Activated T-helper 2 cell treated with anti-CD3 and anti-CD28 coated beads, Interferon-gamma antibody, Interleukin-2, Interleukin-4, amounts not matched to agents 10 μg/mL and 5 μg/mL and 100 μg/mL, durations not matched to agents 14 hours and 24 hours and 36 hours (primary cell): ENCODE measurements at regions of chr10 and their contacts with region 1.

Region 1: GRCh38 chr10:114304017-114304570 is 65.0 kb downstream of the VWA2 start:
- DNase-seq: peak; percentile 59
- H3K4me3 Mint-ChIP-seq: peak overlapping the region; percentile 90
- H3K27ac Mint-ChIP-seq: peak overlapping the region; percentile 84
- H3K4me1 Mint-ChIP-seq: peaks cover 13% of the 10 kb centered on the region
- H3K27me3 Mint-ChIP-seq: no peaks in the 10 kb centered on the region

Region 2: DNA sequence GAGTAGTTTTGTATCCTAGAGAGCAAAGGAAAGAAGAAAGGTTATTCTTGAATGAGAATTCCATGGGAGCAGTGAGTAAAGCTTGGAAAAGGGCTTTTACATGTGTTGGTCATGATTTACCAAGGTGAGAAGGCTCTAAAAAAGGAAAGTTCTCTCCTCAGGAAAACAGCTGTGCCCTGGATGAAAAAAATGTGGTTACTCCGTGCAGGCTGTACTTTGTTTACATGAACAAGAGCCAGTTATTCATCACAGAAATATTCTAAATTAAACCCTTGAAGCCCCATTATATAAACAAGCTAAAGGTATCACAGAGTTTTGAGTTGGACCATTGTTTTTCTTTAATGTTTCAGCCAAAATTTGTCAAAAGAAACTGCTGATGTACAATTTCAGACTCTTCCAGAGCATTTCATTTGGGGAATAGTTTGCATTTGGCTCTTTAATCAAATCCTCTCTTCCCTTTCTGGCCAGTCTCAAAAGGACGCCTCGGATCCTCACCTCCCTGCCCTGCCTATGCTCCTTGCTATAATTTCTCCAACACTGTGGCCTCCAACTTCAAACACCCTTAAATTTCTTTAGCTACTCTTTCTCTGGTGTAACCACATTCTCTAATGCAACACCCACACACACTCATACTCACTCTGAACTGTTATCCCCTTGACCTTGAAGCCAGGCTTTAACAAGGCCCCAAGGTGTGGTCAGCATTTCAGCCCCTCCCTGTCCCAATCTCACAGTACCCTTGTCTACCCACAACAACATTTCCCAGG is 52.8 kb after region 1 on chr10:
- intact Hi-C with region 1: loop called (anchors 5 kb)
- DNase-seq: no peak
- H3K4me3 Mint-ChIP-seq: no peak overlapping the region
- H3K27ac Mint-ChIP-seq: no peak overlapping the region
- H3K4me1 Mint-ChIP-seq: peaks cover 10% of the 10 kb centered on the region
- H3K27me3 Mint-ChIP-seq: peaks cover 10% of the 10 kb centered on the region

Region 3: DNA sequence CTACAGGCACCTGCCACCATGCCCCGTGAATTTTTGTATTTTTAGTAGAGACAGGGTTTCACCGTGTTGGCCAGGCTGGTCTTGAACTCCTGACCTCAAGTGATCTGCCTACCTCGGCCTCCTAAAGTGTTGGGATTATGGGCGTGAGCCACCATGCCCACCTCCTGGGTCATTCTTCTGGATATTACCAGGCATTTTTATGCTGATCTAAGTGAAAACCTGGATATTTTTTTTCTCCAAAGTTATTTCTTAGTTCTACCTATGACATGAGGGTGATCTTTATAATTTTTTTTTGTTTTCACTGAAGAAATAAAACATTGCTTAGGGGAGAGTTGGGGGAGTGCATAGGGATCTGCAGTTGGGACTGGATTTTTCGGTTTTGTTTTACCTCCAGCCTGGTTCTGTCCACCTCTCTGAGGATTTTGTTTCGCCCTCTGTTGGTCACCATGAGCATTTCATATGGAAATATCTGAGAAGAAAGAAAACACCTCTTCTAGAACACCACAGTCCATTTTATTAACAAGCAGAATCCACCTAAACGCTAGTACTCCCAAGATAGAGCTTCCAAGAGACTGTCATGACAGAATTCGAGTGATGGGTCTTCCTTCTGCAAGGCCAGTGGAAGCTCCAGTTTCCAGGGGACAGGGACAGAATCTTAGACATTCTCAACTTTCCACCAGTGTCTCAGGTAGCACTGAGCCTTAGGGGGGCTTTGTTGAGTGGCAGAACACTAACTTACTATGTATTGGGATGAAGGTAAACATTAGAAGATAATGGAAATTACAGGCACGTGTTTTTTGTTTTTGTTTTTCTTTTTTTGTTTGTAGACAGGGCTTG is 133.6 kb after region 1 on chr10:
- intact Hi-C with region 1: loop called (anchors 1 kb)
- DNase-seq: no peak
- H3K4me3 Mint-ChIP-seq: no peak overlapping the region
- H3K27ac Mint-ChIP-seq: no peak overlapping the region
- H3K4me1 Mint-ChIP-seq: no peaks in the 10 kb centered on the region
- H3K27me3 Mint-ChIP-seq: no peaks in the 10 kb centered on the region

Region 4: GRCh38 chr10:114550756-114551635 is 246.9 kb after region 1 on chr10:
- intact Hi-C with region 1: loop called (anchors 1 kb)
- DNase-seq: no peak
- H3K4me3 Mint-ChIP-seq: no peak overlapping the region
- H3K27ac Mint-ChIP-seq: no peak overlapping the region
- H3K4me1 Mint-ChIP-seq: peaks cover 19% of the 10 kb centered on the region
- H3K27me3 Mint-ChIP-seq: peaks cover 2% of the 10 kb centered on the region